B cell (primary cell): ENCODE measurements at regions of chr7 and their contacts with region 1.

Region 1: DNA sequence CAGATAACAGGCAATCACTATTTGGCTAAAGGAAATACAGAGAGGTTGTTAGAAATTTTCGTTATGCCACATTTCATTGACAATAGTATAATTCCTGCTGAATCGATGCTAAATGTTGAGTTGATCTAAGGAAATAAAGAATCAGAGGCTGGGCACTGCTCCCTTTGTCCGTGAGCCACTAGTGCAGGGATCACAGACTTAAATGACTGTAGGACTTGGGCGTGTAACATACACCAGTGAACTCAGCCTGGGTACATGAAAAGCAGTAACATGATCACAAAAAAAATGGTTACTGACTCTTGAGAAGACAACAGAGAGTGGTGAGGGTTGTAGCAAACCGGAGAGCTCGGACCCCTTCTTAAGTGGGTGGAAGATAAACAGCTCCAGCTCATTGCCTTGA is 11.8 kb upstream of the ITGB8 start:
- DNase-seq: no peak
- ATAC-seq: no peak
- H3K4me3 ChIP-seq: no peak overlapping the region
- H3K4me3 Mint-ChIP-seq: no peak overlapping the region
- H3K27ac ChIP-seq: no peak overlapping the region
- H3K27ac Mint-ChIP-seq: no peak overlapping the region
- H3K4me1 ChIP-seq: no peaks in the 10 kb centered on the region
- H3K4me1 Mint-ChIP-seq: no peaks in the 10 kb centered on the region
- H3K27me3 ChIP-seq: no peaks in the 10 kb centered on the region
- H3K27me3 Mint-ChIP-seq: no peaks in the 10 kb centered on the region
- CTCF ChIP-seq: no peak

Region 2: GRCh38 chr7:20330240-20330927 is 11.5 kb after region 1 on chr7 and contains the start of gene ITGB8:
- CTCF ChIA-PET with region 1: interaction called, 4 read pairs
- POLR2A ChIA-PET with region 1: interaction called, 5 read pairs
- intact Hi-C with region 1: loop called (anchors 1 kb)
- DNase-seq: peak; percentile 72
- ATAC-seq: peak; percentile 68
- H3K4me3 ChIP-seq: peak within 1 kb of the TSS; percentile 46 to 74 (median 70)
- H3K4me3 Mint-ChIP-seq: peak within 1 kb of the TSS; percentile 99
- H3K27ac ChIP-seq: no peak within 1 kb of the TSS
- H3K27ac Mint-ChIP-seq: peak within 1 kb of the TSS; percentile 86
- H3K4me1 ChIP-seq: peaks cover 14 to 21% of the 10 kb centered on the region in 2 donors
- H3K4me1 Mint-ChIP-seq: peaks cover 19% of the 10 kb centered on the region
- H3K27me3 ChIP-seq: peaks cover 0 to 17% (median 14%) of the 10 kb centered on the region in 4 experiments
- H3K27me3 Mint-ChIP-seq: peaks cover 21% of the 10 kb centered on the region
- CTCF ChIP-seq: no peak
- total RNA-seq, gene ITGB8: 0.30 and 0.32 TPM in 2 replicates

Region 3: DNA sequence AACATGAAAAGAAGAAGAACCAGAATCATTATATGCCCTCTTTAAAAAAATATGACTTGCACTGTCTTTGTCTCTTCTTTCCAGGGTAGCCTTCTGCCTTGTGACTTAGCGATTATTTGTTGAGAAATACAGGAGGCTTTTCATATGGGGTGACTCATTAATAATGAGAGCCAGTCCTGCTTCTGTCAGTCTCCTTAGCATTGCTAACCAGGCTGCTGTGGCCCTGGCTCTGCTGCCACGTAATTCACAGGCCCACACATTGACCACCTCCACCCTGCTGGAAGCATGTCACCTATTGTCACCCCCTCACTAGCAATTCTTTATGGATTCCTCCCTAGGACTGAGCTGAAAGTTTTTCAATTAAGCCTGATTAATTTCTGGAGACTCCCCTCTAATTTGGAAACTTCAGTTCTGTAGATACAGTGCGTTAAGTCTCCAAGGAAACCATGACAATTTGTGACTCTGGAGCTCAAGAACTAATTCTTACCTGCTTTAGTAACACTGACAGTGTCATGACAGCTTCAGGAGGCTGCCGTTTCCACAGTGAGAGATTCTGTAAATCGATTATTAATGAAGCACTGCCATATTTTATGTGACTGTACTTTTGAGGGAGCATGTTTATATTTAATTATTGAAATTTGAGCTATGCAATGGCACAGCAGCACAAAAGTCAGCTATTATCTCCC is 735.6 kb after region 1 on chr7:
- CTCF ChIA-PET with region 1: no interaction called
- POLR2A ChIA-PET with region 1: no interaction called
- intact Hi-C with region 1: no loop called
- DNase-seq: no peak
- ATAC-seq: no peak
- H3K4me3 ChIP-seq: no peak overlapping the region
- H3K4me3 Mint-ChIP-seq: no peak overlapping the region
- H3K27ac ChIP-seq: no peak overlapping the region
- H3K27ac Mint-ChIP-seq: no peak overlapping the region
- H3K4me1 ChIP-seq: no peaks in the 10 kb centered on the region
- H3K4me1 Mint-ChIP-seq: no peaks in the 10 kb centered on the region
- H3K27me3 ChIP-seq: no peaks in the 10 kb centered on the region
- H3K27me3 Mint-ChIP-seq: peaks cover 5% of the 10 kb centered on the region
- CTCF ChIP-seq: no peak